ENCODE measurements at regions of chr5 and their contacts with region 1.

Region 1: GRCh38 chr5:124741711-124742496 is 4.5 kb downstream of the ZNF608 start:
- DNase-seq: peak; percentile 57 to 63
- H3K4me3 ChIP-seq: no peak overlapping the region
- H3K27ac ChIP-seq: no peak overlapping the region
- H3K4me1 ChIP-seq: peaks cover 19% of the 10 kb centered on the region
- H3K27me3 ChIP-seq: no peaks in the 10 kb centered on the region
- CTCF ChIP-seq: no peak

Region 2: GRCh38 chr5:124343451-124343867 is 398.4 kb before region 1 on chr5:
- CTCF ChIA-PET with region 1: no interaction called
- POLR2A ChIA-PET with region 1: no interaction called
- intact Hi-C with region 1: no loop called
- DNase-seq: no peak
- H3K4me3 ChIP-seq: no peak overlapping the region
- H3K27ac ChIP-seq: no peak overlapping the region
- H3K4me1 ChIP-seq: no peaks in the 10 kb centered on the region
- H3K27me3 ChIP-seq: no peaks in the 10 kb centered on the region
- CTCF ChIP-seq: no peak

Region 3: GRCh38 chr5:124402144-124402581 is 339.7 kb before region 1 on chr5:
- CTCF ChIA-PET with region 1: no interaction called
- POLR2A ChIA-PET with region 1: no interaction called
- intact Hi-C with region 1: loop called (anchors 5 kb)
- DNase-seq: peak; percentile 59 to 97
- H3K4me3 ChIP-seq: peak overlapping the region; percentile 34; the same call in 1 of the 2 replicates
- H3K27ac ChIP-seq: peak overlapping the region; percentile 94
- H3K4me1 ChIP-seq: peaks cover 38% of the 10 kb centered on the region
- H3K27me3 ChIP-seq: no peaks in the 10 kb centered on the region
- CTCF ChIP-seq: no peak

Region 4: DNA sequence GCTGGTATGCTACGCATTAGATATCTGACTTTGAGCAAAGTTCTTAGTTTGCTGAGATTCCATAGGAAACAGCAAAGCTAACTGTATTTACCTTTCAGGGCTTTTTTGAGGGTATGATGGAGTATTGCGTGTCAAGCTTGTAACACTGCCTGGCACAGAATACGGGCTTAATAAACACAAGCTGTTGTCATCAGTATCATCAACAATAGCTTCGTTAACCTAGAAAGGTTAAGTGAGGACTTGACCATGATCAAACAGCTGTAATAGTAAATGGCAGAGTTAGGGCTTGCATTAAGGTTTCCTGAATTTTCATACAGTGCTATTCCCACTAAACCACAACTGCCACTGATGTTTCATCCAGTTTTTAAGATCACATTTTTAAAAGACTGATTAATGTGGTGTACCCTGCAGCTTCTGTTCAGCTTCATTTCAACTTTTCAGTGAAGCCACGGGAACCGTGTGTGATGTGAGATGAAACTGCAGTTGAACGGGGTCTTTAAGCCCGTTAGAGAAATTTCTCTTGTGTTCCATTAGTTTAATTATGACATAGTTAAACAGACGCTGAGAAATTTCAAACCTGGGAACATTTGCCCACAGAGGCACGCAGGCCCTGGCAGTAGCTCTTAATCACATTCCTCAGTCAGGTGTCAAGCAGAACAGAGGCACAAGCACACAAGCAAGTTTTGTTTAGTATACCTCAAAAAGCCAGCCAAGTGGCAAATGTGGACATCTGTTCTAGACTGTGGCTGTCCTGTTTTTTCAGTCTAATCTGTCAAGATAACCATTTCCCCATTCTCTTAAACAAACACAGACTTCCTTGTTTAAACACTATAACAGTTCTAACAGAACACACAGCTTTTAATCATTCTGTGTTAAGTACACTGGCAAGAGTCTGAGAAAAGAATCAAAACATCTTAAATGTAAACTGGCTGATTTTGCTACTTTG is 142.6 kb before region 1 on chr5:
- CTCF ChIA-PET with region 1: no interaction called
- POLR2A ChIA-PET with region 1: no interaction called
- intact Hi-C with region 1: loop called (anchors 1 kb)
- DNase-seq: peak; percentile 41 to 87
- H3K4me3 ChIP-seq: no peak overlapping the region
- H3K27ac ChIP-seq: peak overlapping the region; percentile 45
- H3K4me1 ChIP-seq: peaks cover 36% of the 10 kb centered on the region
- H3K27me3 ChIP-seq: no peaks in the 10 kb centered on the region
- CTCF ChIP-seq: no peak

Region 5: DNA sequence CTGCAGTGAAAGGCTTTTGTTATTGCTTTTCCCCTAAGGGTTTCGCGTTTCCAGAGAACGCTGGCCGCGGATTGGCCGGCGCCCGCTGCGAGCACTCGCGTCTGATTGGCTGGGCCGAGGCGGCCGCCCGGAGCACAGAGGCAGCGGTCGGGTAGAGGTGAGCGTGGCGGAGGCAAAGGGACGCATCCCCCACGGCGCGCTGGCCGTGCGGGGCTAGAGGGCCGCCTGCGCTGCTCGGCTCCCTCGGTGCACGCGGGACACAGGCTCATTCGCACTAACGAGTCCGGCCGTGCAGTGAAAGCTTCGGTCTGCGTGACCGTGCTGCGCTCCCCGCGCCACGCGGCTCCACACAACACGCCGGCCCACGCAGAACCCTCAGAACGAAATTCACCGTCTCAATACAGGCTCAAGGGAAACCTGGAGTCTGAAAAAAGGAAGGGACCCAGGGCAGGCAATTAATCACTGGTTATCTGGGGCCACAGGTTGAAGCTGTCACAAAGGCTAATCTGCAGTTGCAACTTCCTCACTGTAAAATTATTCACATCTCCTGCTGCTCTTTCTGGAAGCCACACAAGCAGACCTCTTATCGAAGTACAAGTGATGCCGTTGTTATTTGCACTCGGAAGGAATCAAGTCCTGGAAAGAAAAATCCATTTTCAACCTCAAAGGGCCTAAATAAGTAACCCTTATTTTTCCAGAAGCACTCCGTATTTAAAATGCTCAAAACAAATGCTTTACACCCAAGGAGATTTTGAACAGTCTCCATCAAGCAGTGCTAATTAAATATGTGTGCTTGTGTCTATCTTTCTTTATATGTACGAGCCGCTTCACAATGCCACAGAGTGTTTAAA is 90.0 kb before region 1 on chr5:
- CTCF ChIA-PET with region 1: no interaction called
- POLR2A ChIA-PET with region 1: no interaction called
- intact Hi-C with region 1: loop called (anchors 1 kb)
- DNase-seq: peak; percentile 38 to 84
- H3K4me3 ChIP-seq: peak overlapping the region; percentile 63
- H3K27ac ChIP-seq: peak overlapping the region; percentile 68
- H3K4me1 ChIP-seq: peaks cover 67% of the 10 kb centered on the region
- H3K27me3 ChIP-seq: no peaks in the 10 kb centered on the region
- CTCF ChIP-seq: no peak

Region 6: GRCh38 chr5:124764992-124765611 is 23.2 kb after region 1 on chr5:
- CTCF ChIA-PET with region 1: no interaction called
- POLR2A ChIA-PET with region 1: no interaction called
- intact Hi-C with region 1: no loop called
- DNase-seq: no peak
- H3K4me3 ChIP-seq: no peak overlapping the region
- H3K27ac ChIP-seq: no peak overlapping the region
- H3K4me1 ChIP-seq: no peaks in the 10 kb centered on the region
- H3K27me3 ChIP-seq: no peaks in the 10 kb centered on the region
- CTCF ChIP-seq: no peak

Region 7: GRCh38 chr5:124796495-124796894 is 54.6 kb after region 1 on chr5:
- CTCF ChIA-PET with region 1: no interaction called
- POLR2A ChIA-PET with region 1: no interaction called
- intact Hi-C with region 1: no loop called
- DNase-seq: no peak
- H3K4me3 ChIP-seq: no peak overlapping the region
- H3K27ac ChIP-seq: no peak overlapping the region
- H3K4me1 ChIP-seq: no peaks in the 10 kb centered on the region
- H3K27me3 ChIP-seq: no peaks in the 10 kb centered on the region
- CTCF ChIP-seq: no peak